PC-9 (cell line): ENCODE measurements at regions of chr3 and their contacts with region 1.

Region 1: DNA sequence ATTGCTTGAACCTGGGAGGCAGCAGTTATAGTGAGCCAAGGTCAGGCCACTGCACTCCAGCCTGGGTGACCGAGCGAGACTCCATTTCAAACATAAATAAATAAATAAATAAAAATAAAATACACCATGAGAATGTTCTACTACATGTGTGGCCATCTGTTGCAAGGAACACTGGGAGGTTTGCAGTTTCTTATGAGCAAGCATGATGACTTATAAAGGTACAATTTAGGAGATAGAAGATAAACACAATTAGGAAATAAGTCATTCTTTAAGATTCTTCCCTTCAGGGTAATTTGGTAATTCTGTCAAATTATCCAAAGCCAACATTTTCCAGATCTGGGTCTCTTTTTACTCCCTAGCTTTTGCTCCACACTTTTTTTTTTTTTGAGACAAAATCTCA is 13.4 kb downstream of the HTR3C start:
- DNase-seq: no peak
- H3K4me3 ChIP-seq: no peak overlapping the region
- H3K27ac ChIP-seq: no peak overlapping the region
- H3K4me1 ChIP-seq: no peaks in the 10 kb centered on the region
- H3K27me3 ChIP-seq: no peaks in the 10 kb centered on the region
- CTCF ChIP-seq: no peak

Region 2: DNA sequence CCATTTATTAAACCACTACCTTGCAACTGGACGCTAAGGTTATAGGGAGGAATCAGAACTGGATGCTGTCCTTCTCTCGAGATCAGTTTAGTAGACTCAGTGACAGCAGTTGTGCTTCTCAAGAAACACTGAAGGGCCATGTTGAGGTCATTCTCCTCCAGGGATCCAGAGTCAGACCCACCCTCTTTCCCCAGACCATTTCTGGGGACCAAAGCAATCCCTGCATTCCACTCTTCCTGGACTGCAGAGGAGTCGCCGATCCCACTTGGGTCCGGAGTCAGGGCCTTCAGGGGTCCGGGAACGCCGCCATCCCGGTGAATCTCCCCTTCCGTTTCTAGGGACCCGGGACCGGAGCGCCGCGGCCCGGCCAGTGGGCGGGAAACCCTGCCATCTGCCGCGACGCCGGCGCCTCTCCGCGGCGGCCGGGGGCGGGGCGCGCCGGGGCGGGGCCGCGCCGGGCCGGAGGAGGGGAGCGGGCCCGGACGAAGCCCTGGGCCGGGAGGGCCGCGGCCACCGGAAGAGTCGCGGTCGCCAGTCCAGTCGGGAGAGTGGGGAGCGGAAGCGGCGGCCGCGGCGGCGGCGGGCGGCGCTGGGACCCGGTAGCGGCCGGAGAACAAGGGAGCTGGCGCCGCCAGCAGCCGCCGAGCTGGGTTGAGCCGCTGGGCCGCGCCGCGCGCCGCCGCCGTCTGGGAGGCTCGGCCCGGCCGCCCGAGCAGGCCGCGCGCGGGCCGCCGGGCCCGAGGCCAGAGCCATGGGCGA is 88.9 kb after region 1 on chr3 and contains the start of gene DVL3:
- CTCF ChIA-PET with region 1: interaction called, 18 read pairs
- POLR2A ChIA-PET with region 1: no interaction called
- intact Hi-C with region 1: no loop called
- DNase-seq: peak in 1 of 2 experiments; percentile 84
- H3K4me3 ChIP-seq: peak within 1 kb of the TSS; percentile 97
- H3K27ac ChIP-seq: peak within 1 kb of the TSS; percentile 63
- H3K4me1 ChIP-seq: peaks cover 26% of the 10 kb centered on the region
- H3K27me3 ChIP-seq: no peaks in the 10 kb centered on the region
- CTCF ChIP-seq: no peak
- total RNA-seq, gene DVL3: 101 and 108 TPM in 2 replicates